Heart left ventricle (tissue), 16 donors: ENCODE measurements at regions of chr15 and their contacts with region 1.

Region 1: DNA sequence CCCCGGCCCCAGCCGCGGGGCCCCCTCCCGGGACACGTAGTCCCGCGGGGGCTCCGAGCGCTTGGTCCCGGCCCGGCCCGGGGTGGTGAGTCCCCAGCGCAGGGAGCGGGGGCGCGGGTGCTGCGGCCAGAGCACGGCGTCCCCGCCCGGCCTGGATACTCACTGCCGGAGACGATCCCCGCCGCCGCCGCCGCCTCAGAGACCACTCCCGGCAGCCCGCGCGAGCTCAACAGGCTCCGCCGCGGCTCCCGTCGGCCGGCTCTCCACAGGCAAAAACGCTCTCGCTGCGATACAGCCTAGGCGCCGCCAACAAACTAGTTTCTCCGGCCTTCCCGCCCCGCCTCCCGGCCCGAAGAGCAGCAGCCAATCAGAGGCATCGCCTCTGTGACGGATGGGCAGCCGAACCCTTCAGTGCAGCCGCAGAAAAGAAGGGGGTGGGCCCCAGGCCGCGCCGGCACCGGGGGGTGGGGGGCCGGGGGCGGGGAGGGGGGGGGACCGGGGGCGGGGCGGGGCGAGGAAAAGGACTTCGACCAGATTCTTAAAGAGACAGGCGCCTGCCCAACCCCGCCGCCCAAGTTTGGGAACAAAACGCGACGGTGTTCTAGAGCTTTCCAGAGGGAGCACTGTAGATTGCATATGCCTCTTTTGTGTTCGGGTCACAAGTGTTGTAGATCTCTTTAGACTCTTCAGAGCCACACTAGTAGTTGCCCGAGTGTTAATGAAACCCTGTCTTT is at the start of gene KLHL25:
- DNase-seq: peak; percentile 96 to 97 (median 96)
- ATAC-seq: peak; percentile 96 to 99 (median 98)
- H3K4me3 ChIP-seq: peak within 1 kb of the TSS; percentile 60 to 99 (median 84)
- H3K27ac ChIP-seq: peak within 1 kb of the TSS; percentile 57 to 95 (median 90)
- H3K4me1 ChIP-seq: peaks cover 0 to 26% (median 19%) of the 10 kb centered on the region in 12 donors
- H3K27me3 ChIP-seq: no peaks in the 10 kb centered on the region
- CTCF ChIP-seq: no peak
- POLR2A ChIP-seq: peak in 1 of 2 donors; percentile 93
- total RNA-seq, gene KLHL25: 2.2 to 8.8 (median 4.3) TPM

Region 2: DNA sequence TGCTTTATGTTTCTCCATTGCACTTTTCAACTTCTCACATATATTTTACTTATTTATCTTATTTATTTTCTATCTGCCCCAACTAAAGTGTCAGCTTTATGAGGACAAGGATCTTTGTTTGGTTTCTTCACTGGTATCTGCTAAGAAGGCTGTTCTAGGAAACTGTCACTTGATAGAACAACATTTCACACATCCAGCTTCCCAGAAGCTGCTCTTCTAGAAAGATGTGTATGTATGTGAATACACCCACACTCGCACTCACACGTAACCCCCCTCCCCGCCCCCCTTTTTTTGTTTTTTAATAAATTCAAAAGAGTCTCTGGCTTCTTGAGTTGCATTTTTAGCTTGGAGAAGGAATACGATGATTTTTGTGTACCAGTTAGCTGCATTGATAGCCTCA is 271.2 kb before region 1 on chr15:
- intact Hi-C with region 1: loop called in 1 of 10 experiments (anchors 2 kb)
- DNase-seq: no peak
- ATAC-seq: no peak
- H3K4me3 ChIP-seq: no peak overlapping the region
- H3K27ac ChIP-seq: no peak overlapping the region
- H3K4me1 ChIP-seq: peaks cover 6 to 66% (median 41%) of the 10 kb centered on the region in 12 donors
- H3K27me3 ChIP-seq: no peaks in the 10 kb centered on the region
- CTCF ChIP-seq: no peak
- POLR2A ChIP-seq: no peak

Region 3: DNA sequence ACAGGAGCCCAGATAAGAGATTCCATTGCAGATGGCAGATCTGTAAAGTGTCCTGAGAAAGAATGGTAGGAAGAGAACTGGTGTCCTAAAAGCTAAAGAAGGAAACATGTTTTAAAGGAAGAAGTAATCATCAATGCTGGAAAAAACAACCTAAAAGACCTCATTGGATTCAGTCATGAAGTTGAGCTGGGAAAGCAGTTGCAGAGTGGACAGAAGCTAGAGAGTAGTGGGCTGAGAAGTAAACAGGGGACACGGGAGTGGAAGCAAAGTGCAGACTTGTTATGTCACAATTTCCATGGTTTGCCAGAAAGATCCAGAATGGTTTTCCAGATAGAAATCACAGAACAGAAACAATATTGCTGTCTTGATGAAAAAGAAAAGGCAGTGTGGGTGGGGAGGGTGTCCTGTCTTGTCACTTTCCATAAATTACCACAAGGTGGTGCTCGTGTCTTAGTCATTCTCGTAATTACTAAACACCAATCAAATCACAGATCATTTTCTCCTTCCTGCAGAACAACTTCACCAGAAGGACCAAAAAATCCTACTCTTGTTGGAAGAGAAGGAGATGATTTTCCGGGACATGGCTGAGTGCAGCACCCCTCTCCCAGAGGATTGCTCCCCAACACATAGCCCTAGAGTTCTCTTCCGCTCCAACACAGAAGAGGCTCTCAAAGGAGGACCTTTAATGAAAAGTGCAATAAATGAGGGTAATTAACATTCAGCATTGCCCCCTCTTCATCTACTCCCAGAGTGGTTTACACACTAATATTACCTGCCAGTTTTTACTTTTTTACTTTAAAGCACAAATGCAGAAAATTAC is 64.6 kb before region 1 on chr15:
- intact Hi-C with region 1: loop called in 1 of 10 experiments (anchors 5 kb)
- DNase-seq: peak in 2 of 5 donors; percentile 34 to 45
- ATAC-seq: peak; percentile 18 to 64 (median 57)
- H3K4me3 ChIP-seq: no peak overlapping the region
- H3K27ac ChIP-seq: peak overlapping the region in 5 of 12 donors; percentile 4 to 82 (median 65)
- H3K4me1 ChIP-seq: peaks cover 0 to 41% (median 18%) of the 10 kb centered on the region in 12 donors
- H3K27me3 ChIP-seq: no peaks in the 10 kb centered on the region
- CTCF ChIP-seq: peak; percentile 60 to 83 (median 76)
- POLR2A ChIP-seq: no peak

Region 4: DNA sequence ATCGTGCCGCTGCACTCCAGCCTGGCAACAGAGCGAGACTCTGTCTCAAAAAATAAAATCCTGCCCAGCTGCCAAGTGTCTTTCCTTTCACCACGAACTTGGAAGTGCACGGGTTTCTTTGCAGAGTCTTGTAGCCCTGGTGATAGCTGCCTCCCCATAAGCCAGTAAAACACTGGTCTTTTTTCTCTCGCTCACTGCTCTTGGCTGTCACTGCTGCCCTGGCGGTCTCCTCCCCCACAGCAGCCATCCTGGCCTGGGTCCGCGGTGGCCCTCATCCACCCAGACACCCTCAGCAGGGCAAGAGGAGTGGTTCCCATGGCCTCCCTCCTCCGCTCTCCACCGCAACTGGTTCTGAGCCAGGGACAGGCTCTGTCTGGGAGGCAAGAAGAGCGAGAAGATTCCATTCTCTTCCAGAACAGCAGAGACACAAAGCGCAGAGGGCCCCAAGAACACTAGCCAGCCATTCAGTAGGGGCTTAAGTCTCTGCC is 44.4 kb before region 1 on chr15:
- intact Hi-C with region 1: loop called in 5 of 10 experiments (anchors 5 kb)
- DNase-seq: peak; percentile 75 to 89 (median 85)
- ATAC-seq: peak; percentile 50 to 78 (median 68)
- H3K4me3 ChIP-seq: peak overlapping the region in 7 of 12 donors; percentile 4 to 45 (median 23)
- H3K27ac ChIP-seq: peak overlapping the region; percentile 65 to 90 (median 76)
- H3K4me1 ChIP-seq: peaks cover 4 to 77% (median 42%) of the 10 kb centered on the region in 12 donors
- H3K27me3 ChIP-seq: no peaks in the 10 kb centered on the region
- CTCF ChIP-seq: no peak
- POLR2A ChIP-seq: no peak

Region 5: GRCh38 chr15:85840065-85840801 is 45.5 kb after region 1 on chr15:
- intact Hi-C with region 1: loop called in 3 of 10 experiments (anchors 5 kb)
- DNase-seq: peak; percentile 72 to 91 (median 82)
- ATAC-seq: peak; percentile 78 to 95 (median 92)
- H3K4me3 ChIP-seq: peak overlapping the region in 9 of 12 donors; percentile 20 to 55 (median 41)
- H3K27ac ChIP-seq: no peak overlapping the region
- H3K4me1 ChIP-seq: peaks cover 0 to 11% (median 7%) of the 10 kb centered on the region in 12 donors
- H3K27me3 ChIP-seq: no peaks in the 10 kb centered on the region
- CTCF ChIP-seq: peak; percentile 86 to 98 (median 92)
- POLR2A ChIP-seq: no peak